Prostate gland (tissue), 2 donors: ENCODE measurements at regions of chr3 and their contacts with region 1.

Region 1: DNA sequence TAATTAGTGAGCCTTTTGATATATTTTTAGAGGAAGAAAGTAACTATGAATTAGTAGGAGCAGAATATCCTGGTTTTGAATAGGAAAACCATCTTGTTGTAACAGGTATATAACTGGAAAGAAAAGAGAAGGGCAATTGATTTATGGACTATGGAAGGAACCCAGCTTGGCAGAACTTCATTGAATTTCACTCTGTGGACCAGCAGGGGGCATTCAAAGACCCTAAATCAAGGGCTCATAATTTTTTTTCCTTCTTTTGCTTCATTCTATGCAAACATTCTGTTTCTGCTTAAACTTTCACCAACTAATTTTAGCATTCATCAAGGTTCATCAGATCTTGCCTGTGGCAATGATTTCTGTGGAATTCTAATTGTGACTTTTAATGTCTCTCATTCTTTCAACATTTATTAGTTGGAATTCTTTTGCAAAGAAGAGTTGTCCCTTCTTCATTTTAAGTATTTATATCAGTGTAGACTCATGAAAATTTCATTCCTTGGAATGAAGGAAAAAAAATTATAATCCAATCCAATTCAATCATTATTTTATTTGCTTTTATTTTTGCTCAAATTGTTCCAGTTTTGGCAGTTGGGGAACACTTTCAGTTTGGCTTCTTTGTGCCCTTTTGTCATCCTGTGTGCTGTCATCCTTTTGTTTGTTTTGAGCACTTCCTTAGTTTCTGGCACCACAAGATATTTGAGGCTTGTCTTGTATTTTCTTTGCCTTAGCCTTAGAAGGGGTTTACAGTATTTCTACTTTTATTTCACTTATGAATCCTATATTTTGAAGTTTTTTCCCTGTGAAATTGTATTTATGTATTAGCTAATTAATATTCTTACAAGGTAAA is 30.4 kb downstream of the NXPE3 start:
- DNase-seq: peak; percentile 29
- H3K4me3 ChIP-seq: no peak overlapping the region
- H3K27ac ChIP-seq: peak overlapping the region in 1 of 2 donors; percentile 13
- H3K4me1 ChIP-seq: no peaks in the 10 kb centered on the region
- H3K27me3 ChIP-seq: no peaks in the 10 kb centered on the region
- CTCF ChIP-seq: peak in 3 of 4 experiments; percentile 59 to 68 (median 66)
- POLR2A ChIP-seq: no peak

Region 2: GRCh38 chr3:101544161-101544850 is 265.1 kb before region 1 on chr3:
- intact Hi-C with region 1: no loop called
- DNase-seq: no peak
- H3K4me3 ChIP-seq: no peak overlapping the region
- H3K27ac ChIP-seq: no peak overlapping the region
- H3K4me1 ChIP-seq: no peaks in the 10 kb centered on the region
- H3K27me3 ChIP-seq: no peaks in the 10 kb centered on the region
- CTCF ChIP-seq: no peak
- POLR2A ChIP-seq: no peak

Region 3: DNA sequence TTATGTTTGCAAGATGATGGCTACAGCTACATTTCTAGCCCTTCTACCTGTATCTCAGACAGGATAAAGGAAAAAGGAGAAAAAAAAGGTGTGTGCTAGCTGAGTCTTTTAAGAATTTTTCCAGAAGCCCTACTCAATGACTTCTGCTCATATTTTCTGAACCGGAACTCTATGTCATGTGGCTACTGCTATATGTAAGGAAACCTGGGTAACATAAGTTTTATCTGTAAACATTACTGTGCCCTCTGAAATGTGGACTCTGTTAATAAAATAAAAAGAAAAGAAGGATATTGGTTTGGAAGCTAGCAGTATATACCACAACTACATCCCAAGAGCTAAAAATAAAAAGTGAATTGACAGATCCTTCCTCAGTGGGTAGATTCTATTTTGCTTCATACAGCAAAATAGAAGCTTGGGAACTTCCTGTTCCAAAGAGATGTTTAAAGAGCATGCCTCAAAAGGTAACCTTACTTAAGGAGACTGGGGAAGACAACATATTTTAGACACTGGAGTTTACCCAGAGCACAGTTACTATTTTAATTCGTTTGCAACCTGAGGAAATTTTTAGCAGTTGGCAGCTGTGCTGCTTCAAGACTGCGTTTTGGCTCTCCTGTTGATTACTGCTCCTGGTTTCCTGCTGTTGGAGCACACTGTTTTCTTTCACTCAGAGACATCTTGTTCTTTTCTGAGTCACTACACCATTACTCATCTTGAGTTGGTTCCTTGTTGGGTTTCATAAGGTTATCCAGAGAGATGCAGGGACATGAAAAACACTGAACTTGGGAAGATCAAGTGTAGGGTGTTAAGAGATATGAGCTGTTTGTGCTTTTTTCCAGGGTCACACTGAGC is 320.6 kb after region 1 on chr3:
- intact Hi-C with region 1: loop called (anchors 10 kb)
- DNase-seq: peak; percentile 10
- H3K4me3 ChIP-seq: no peak overlapping the region
- H3K27ac ChIP-seq: peak overlapping the region; percentile 51 to 54
- H3K4me1 ChIP-seq: no peaks in the 10 kb centered on the region
- H3K27me3 ChIP-seq: no peaks in the 10 kb centered on the region
- CTCF ChIP-seq: no peak
- POLR2A ChIP-seq: no peak

Region 4: GRCh38 chr3:102225407-102226132 is 416.2 kb after region 1 on chr3:
- intact Hi-C with region 1: loop called (anchors 2 kb)
- DNase-seq: peak; percentile 18
- H3K4me3 ChIP-seq: no peak overlapping the region
- H3K27ac ChIP-seq: no peak overlapping the region
- H3K4me1 ChIP-seq: peaks cover 3% of the 10 kb centered on the region
- H3K27me3 ChIP-seq: no peaks in the 10 kb centered on the region
- CTCF ChIP-seq: peak in 3 of 4 experiments; percentile 61 to 76 (median 75)
- POLR2A ChIP-seq: no peak

Region 5: GRCh38 chr3:102536456-102536855 is 727.1 kb after region 1 on chr3:
- intact Hi-C with region 1: loop called (anchors 10 kb)
- DNase-seq: peak; percentile 4
- H3K4me3 ChIP-seq: no peak overlapping the region
- H3K27ac ChIP-seq: no peak overlapping the region
- H3K4me1 ChIP-seq: no peaks in the 10 kb centered on the region
- H3K27me3 ChIP-seq: no peaks in the 10 kb centered on the region
- CTCF ChIP-seq: peak in 3 of 4 experiments; percentile 28 to 52 (median 46)
- POLR2A ChIP-seq: no peak